ENCODE measurements at regions of chr12 and their contacts with region 1.

Region 1: GRCh38 chr12:56751712-56752598 is at the start of gene PRIM1:
- DNase-seq: peak; percentile 69 to 91 (median 78)
- ATAC-seq: peak; percentile 93
- H3K4me3 ChIP-seq: peak within 1 kb of the TSS; percentile 98
- H3K4me3 Mint-ChIP-seq: peak within 1 kb of the TSS; percentile 88 to 98 (median 97)
- H3K27ac ChIP-seq: peak within 1 kb of the TSS; percentile 81
- H3K27ac Mint-ChIP-seq: peak within 1 kb of the TSS; percentile 80 to 99 (median 93)
- H3K4me1 ChIP-seq: peaks cover 3 to 7% of the 10 kb centered on the region in 2 donors
- H3K4me1 Mint-ChIP-seq: peaks cover 22 to 46% (median 42%) of the 10 kb centered on the region in 7 donors
- H3K27me3 ChIP-seq: no peaks in the 10 kb centered on the region
- H3K27me3 Mint-ChIP-seq: no peaks in the 10 kb centered on the region
- total RNA-seq, gene PRIM1: 11.5 to 39.8 (median 26.2) TPM

Region 2: GRCh38 chr12:56645717-56646446 is 106.1 kb before region 1 on chr12 and contains the start of gene ATP5F1B:
- CTCF ChIA-PET with region 1: no interaction called
- POLR2A ChIA-PET with region 1: no interaction called
- intact Hi-C with region 1: loop called in 1 of 2 experiments (anchors 1 kb)
- DNase-seq: peak; percentile 65 to 97 (median 93)
- ATAC-seq: peak; percentile 97
- H3K4me3 ChIP-seq: peak within 1 kb of the TSS; percentile 83
- H3K4me3 Mint-ChIP-seq: peak within 1 kb of the TSS; percentile 82 to 98 (median 94)
- H3K27ac ChIP-seq: peak within 1 kb of the TSS; percentile 93
- H3K27ac Mint-ChIP-seq: peak within 1 kb of the TSS; percentile 97 to 100 (median 99)
- H3K4me1 ChIP-seq: peaks cover 4 to 21% of the 10 kb centered on the region in 2 donors
- H3K4me1 Mint-ChIP-seq: peaks cover 17 to 39% (median 34%) of the 10 kb centered on the region in 7 donors
- H3K27me3 ChIP-seq: no peaks in the 10 kb centered on the region
- H3K27me3 Mint-ChIP-seq: no peaks in the 10 kb centered on the region
- total RNA-seq, gene ATP5F1B: 217 to 476 (median 267) TPM

Region 3: DNA sequence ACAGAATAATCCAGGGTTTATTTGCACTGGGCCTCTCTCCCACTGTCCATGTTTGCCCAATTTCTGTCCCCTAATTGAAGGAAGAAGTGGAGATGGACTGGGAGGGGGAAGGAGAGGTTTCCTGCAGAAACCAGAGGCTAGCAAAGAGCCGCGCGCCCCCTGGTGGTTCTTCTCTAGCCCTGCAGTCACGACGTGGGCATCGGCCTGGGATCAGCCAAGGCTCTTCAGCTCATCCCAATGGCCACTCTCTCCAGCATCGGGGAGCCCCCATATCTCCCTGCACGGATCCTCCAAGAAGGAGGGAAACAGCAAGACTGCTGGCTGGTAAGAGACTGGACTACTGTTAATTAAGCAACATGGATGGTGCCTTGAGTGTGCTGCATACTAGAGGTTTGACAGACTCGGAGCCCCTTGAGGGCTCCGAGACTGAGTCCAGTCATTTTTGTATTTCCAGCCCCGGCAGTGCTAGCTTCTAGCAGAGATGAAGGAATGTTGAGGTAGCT is 235.6 kb after region 1 on chr12:
- CTCF ChIA-PET with region 1: interaction called, 44 read pairs
- POLR2A ChIA-PET with region 1: no interaction called
- intact Hi-C with region 1: loop called in 1 of 2 experiments (anchors 1 kb)
- DNase-seq: peak; percentile 51 to 77 (median 66)
- ATAC-seq: peak; percentile 89
- H3K4me3 ChIP-seq: no peak overlapping the region
- H3K4me3 Mint-ChIP-seq: peak overlapping the region in 6 of 10 donors; percentile 45 to 72 (median 56)
- H3K27ac ChIP-seq: no peak overlapping the region
- H3K27ac Mint-ChIP-seq: peak overlapping the region in 1 of 9 donors; percentile 21
- H3K4me1 ChIP-seq: peaks cover 0 to 7% of the 10 kb centered on the region in 2 donors
- H3K4me1 Mint-ChIP-seq: peaks cover 9 to 31% (median 23%) of the 10 kb centered on the region in 7 donors
- H3K27me3 ChIP-seq: no peaks in the 10 kb centered on the region
- H3K27me3 Mint-ChIP-seq: peaks cover 0 to 6% (median 0%) of the 10 kb centered on the region in 5 donors

Region 4: DNA sequence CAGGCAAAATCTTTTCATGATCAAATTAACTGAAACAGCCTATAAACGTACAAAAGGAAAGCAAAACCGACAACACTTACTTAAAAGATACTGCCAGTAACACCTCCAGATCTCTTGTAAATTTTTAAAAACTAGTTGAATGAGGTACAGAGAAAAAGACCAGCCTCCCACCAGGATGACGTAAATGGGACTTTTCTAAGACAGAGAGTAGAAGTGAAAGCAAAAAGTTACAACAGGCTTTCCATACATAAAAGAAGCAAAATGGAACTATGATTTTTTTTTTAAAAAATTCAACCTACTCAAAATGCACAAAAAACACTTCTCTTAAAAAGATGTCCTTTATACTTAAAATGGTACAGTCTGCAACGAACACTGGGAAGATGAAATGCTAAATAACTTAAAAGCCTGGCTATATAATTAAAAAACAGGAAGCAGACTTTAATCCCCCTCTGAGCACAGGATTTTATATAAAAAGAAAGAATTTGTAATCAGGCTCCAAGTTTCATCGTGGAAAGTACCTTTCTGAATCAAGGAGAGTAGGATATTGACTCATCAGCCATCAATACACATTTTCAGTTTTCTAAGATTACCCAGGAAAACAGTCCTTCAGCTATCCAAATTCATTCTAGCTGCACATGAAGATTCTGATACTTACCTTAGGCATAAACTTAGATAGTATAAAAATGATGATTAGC is 312.2 kb after region 1 on chr12:
- CTCF ChIA-PET with region 1: interaction called, 8 read pairs
- POLR2A ChIA-PET with region 1: interaction called, 4 read pairs
- intact Hi-C with region 1: loop called (anchors 1 to 2 kb)
- DNase-seq: peak in 7 of 9 donors; percentile 67 to 90 (median 85)
- ATAC-seq: peak; percentile 97
- H3K4me3 ChIP-seq: peak overlapping the region; percentile 15
- H3K4me3 Mint-ChIP-seq: peak overlapping the region; percentile 13 to 90 (median 80)
- H3K27ac ChIP-seq: peak overlapping the region; percentile 76
- H3K27ac Mint-ChIP-seq: peak overlapping the region; percentile 79 to 97 (median 91)
- H3K4me1 ChIP-seq: peaks cover 17 to 20% of the 10 kb centered on the region in 2 donors
- H3K4me1 Mint-ChIP-seq: peaks cover 10 to 45% (median 34%) of the 10 kb centered on the region in 7 donors
- H3K27me3 ChIP-seq: no peaks in the 10 kb centered on the region
- H3K27me3 Mint-ChIP-seq: no peaks in the 10 kb centered on the region

Region 5: DNA sequence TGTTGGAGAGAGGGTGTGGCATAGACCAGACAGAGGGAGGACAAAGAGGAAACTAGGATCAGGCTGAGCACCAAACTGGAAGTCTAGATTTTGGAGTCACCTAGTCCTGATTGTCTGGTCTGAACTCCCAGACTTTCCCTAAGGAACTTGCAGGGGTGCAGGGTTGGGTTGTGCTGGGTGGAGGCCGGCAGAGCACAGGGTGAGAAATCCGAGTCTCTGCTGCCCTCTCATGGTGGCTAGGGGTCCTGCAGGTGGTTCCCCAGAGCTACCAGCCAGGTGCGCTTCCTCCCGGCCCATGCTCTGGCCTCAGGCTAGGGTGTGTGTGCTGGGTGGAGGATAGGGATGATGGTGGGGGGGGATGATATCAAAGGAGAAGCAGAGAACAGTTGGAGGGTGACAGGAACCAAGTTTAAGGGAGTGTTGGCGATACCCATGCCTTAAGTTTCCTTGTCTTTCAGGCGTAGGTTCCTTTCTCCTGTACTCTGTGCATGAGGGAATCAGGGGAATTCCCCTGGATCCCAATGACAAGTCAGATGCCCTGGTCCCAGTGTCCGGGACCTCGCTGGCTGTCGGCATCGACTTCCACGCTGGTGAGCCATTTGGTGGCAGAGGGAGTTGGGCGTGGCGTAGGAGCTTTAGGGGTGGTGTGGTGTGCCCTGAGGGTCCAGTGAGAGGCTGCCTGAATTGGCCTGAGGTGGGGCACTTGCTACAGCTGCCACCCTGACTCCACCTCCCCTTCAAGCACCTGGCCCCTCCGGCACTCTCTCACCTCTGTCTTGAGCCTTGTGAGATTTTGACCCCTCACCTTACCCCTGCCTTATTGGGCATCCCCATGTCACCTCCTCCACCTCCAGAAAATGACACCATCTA is 431.2 kb after region 1 on chr12:
- CTCF ChIA-PET with region 1: no interaction called
- POLR2A ChIA-PET with region 1: no interaction called
- intact Hi-C with region 1: loop called (anchors 1 to 10 kb)
- DNase-seq: peak; percentile 54 to 85 (median 73)
- ATAC-seq: peak; percentile 95
- H3K4me3 ChIP-seq: no peak overlapping the region
- H3K4me3 Mint-ChIP-seq: no peak overlapping the region
- H3K27ac ChIP-seq: no peak overlapping the region
- H3K27ac Mint-ChIP-seq: peak overlapping the region in 1 of 9 donors; percentile 24
- H3K4me1 ChIP-seq: no peaks in the 10 kb centered on the region
- H3K4me1 Mint-ChIP-seq: peaks cover 2 to 10% (median 6%) of the 10 kb centered on the region in 7 donors
- H3K27me3 ChIP-seq: no peaks in the 10 kb centered on the region
- H3K27me3 Mint-ChIP-seq: peaks cover 0 to 2% (median 0%) of the 10 kb centered on the region in 5 donors